PC-9 (cell line): ENCODE measurements at regions of chr10 and their contacts with region 1.

Region 1: DNA sequence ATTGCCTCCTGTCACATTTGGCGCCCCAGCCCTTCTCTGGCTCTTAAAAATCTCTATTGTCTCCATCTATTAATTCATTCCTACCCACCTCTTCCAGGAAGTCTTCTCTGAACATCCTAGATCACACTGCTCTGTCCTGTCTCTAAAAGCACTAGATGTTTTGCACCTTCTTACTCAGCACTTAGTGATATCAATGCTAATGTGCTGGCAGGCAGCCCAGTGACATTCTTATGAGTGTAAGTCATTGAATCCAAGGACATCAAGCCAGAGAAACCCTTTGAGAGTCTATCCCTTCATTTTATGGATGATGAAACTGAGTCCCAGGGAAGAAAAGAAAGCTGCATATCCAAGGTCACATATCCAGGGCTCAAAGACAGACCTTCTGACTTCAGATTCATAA is 48.3 kb upstream of the PAX2 start:
- DNase-seq: no peak
- H3K4me3 ChIP-seq: no peak overlapping the region
- H3K27ac ChIP-seq: no peak overlapping the region
- H3K4me1 ChIP-seq: no peaks in the 10 kb centered on the region
- H3K27me3 ChIP-seq: peaks cover 45% of the 10 kb centered on the region
- CTCF ChIP-seq: no peak

Region 2: DNA sequence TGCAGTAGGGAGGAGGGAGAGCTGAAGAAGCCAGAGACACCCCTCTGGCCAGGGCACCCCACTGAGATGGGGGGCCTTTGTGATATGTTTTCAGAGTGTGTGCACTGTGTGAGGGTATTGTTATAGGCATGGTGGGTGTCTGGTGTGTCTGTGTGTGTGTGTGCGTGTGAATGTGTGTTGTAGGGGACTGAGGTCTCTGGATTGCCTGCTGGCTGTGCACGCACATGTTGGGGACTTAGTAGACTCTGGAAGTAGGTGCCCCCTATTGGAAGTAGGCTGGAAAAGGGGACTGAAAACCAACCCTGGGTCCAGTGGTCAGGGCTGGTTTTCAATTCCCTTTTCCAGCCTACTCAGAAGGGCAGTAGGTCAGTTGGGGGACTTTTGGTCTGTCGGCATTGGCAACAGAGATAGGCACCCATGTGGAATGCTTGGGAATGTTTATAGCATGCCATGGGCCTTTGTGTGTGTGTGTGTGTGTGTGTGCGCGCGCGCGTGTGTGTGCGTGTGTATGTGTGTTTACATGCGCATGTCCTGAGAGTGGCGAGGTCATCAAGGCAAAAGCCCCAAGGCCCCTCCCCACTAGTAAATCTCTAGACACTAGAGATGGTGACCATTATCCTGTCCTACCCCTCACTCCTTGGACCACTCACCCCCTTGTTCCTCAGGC is 82.5 kb before region 1 on chr10:
- CTCF ChIA-PET with region 1: interaction called, 13 read pairs
- POLR2A ChIA-PET with region 1: no interaction called
- intact Hi-C with region 1: no loop called
- DNase-seq: no peak
- H3K4me3 ChIP-seq: no peak overlapping the region
- H3K27ac ChIP-seq: no peak overlapping the region
- H3K4me1 ChIP-seq: no peaks in the 10 kb centered on the region
- H3K27me3 ChIP-seq: peaks cover 76% of the 10 kb centered on the region
- CTCF ChIP-seq: no peak